Activated B cell treated with CpG ODN at 0.5 μM for 24 hours (primary cell): ENCODE measurements at regions of chr5 and their contacts with region 1.

Region 1: DNA sequence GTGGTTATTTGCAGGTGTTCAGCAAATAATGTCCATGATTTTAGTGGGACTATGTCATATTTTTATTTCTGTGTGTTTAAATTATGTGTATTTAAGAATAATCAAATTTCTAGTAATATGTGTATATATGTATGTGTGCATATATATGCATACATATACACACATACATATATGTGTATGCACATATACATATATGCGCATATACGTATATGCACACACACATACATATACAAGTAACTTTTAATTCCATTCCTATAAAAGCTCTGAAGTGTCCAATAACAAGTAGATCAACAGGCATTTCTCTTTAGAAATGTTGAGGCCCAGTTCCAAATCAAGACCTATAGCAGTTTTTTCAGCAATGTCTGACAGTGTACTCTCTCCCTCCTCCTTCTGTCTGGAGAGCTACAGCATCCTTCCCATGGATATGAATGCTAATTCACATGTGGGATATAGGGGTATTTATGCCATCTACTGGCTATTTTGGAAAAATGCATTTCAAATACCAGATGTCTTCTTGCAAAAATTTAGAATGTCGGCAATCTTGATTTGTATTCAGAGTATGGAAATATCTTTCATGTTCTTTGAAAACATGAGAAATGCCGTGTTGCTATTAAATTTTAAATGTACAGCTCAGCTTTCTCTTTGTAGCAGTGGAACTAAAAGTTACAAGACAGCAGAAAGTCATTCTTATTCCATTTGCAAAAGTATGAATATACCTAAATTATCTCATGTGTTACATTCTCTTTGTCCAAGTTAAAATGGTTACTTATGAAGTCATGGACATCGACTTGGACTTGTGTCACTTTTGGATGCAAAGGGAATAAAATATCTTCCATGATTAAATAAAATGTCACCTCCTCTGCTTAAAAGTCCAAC is 647.7 kb downstream of the TAF11L14 start:
- DNase-seq: no peak
- ATAC-seq: peak; percentile 28
- H3K4me3 Mint-ChIP-seq: no peak overlapping the region
- H3K27ac Mint-ChIP-seq: no peak overlapping the region
- H3K4me1 Mint-ChIP-seq: no peaks in the 10 kb centered on the region
- H3K27me3 Mint-ChIP-seq: no peaks in the 10 kb centered on the region
- CTCF ChIP-seq: no peak

Region 2: DNA sequence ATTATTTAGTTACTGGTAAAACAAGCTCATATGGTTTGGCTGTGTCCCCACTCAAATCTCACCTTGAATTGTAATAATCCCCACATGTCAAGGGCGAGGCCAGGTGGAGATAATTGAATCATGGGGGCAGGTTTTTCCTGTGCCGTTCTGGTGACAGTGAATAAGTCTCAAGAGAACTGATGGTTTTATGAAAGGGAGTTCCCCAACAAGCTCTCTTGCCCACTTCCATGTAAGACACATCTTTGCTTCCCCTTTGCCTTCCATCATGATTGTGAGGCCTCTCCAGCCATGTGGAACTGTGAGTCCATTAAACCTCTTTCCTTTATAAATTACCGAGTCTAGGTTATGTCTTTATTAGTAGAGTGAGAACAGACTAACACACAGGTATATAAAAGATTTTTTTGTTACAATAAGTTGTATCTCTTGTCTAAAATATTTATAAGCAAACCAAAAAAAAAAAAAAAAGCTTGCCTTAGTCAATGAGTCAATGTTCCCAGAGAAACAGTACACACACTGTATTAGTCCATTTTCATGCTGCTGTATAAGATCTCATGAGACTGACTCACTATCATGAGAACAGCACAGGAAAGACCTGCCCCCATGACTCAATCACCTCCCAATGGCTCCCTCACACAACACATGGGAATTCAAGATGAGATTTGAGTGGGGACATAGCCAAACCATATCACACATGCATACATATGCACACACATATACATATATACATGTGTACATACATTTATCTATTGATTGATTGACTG is 926.2 kb before region 1 on chr5:
- CTCF ChIA-PET with region 1: no interaction called
- POLR2A ChIA-PET with region 1: no interaction called
- intact Hi-C with region 1: no loop called
- DNase-seq: no peak
- ATAC-seq: peak; percentile 96
- H3K4me3 Mint-ChIP-seq: peak overlapping the region; percentile 41
- H3K27ac Mint-ChIP-seq: peak overlapping the region; percentile 92
- H3K4me1 Mint-ChIP-seq: peaks cover 21% of the 10 kb centered on the region
- H3K27me3 Mint-ChIP-seq: no peaks in the 10 kb centered on the region
- CTCF ChIP-seq: no peak

Region 3: DNA sequence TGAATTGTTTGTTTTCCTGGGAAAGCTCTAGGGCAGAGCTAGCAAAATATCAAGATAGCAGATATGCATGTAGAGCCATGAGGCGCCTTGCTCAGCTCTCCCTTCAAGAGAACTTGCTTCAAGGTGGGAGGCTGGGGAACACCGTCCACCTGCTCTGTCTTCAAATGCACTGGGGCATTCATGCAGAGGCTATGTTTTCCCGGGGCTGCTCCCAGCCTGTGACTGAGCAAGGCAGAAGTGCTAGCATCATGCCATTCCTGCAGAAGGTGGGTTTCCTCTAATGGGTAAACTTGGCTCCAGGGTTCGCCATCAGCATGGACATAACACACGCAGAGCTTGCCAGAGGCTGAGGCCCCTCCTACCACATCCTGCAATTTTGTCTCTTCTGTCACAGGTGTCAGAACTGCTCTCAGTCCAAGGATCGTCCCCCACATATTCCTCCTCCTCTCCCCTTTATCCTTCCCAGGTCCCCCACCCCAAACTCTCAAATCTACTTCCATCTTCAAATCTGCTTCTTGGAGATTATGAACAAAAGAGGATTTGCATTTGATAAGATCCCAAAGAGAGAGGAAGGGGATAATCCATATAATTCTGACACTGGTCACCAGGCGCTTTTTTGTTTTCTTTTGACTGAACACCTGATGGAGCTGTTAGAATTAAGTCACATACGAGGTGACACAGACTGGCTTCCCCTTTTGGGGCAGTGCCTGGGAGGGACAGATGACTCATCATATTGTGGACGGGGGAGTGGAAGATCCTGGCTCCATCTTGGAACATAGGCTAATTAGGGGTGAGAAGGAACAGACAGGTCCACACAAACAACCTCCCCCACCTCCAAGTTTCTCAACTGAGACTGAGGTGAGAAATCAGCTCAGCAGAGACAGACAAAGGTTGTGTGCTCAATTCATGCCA is 868.9 kb before region 1 on chr5:
- CTCF ChIA-PET with region 1: no interaction called
- POLR2A ChIA-PET with region 1: no interaction called
- intact Hi-C with region 1: loop called (anchors 10 kb)
- DNase-seq: no peak
- ATAC-seq: peak; percentile 68
- H3K4me3 Mint-ChIP-seq: no peak overlapping the region
- H3K27ac Mint-ChIP-seq: no peak overlapping the region
- H3K4me1 Mint-ChIP-seq: peaks cover 8% of the 10 kb centered on the region
- H3K27me3 Mint-ChIP-seq: no peaks in the 10 kb centered on the region
- CTCF ChIP-seq: no peak